ENCODE measurements at regions of chr1 and their contacts with region 1.

Region 1: GRCh38 chr1:30801771-30802198 is 44.2 kb upstream of the LAPTM5 start:
- DNase-seq: peak; percentile 94
- H3K4me3 Mint-ChIP-seq: no peak overlapping the region
- H3K27ac Mint-ChIP-seq: no peak overlapping the region
- H3K4me1 Mint-ChIP-seq: peaks cover 4% of the 10 kb centered on the region
- H3K27me3 Mint-ChIP-seq: peaks cover 39% of the 10 kb centered on the region

Region 2: DNA sequence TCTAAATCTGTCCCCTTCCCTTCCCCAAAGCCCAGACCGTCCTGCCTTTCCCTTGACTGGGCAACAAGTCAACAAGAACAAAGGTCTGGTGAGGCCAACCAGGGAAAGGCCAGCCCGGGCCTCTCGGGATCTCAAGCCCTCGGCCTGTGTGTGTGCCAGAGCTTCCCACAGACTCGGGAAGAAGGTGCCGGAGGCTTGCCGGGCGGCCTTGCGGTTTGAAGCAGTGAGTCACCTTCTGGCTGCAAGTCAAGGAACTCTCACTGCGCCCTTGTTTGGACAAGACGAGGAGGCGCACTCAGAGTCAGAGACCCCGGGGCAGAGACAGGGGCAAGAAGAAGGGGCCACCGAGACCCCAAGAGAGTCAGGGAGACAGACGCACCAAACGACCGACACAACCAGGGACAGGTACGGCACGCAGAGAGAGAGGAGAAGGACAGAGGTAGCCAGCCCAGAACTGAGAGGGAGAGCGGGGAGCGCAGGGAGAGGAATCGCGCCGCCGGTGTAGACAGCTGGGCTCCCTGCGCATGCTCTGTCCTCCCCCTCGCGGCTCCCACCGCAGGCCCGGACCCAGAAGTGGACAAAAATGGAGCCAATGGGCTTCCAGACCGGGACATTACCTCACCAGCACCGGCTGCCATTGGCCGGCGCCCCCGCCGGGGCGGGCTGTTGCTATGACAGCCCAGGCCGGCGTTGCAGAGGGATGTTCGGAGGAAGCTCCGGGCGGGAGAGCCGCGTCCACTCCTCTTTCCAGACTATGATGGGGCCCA is 22.4 kb after region 1 on chr1:
- intact Hi-C with region 1: no loop called
- DNase-seq: peak; percentile 87
- H3K4me3 Mint-ChIP-seq: peak overlapping the region; percentile 77
- H3K27ac Mint-ChIP-seq: no peak overlapping the region
- H3K4me1 Mint-ChIP-seq: peaks cover 10% of the 10 kb centered on the region
- H3K27me3 Mint-ChIP-seq: peaks cover 67% of the 10 kb centered on the region

Region 3: DNA sequence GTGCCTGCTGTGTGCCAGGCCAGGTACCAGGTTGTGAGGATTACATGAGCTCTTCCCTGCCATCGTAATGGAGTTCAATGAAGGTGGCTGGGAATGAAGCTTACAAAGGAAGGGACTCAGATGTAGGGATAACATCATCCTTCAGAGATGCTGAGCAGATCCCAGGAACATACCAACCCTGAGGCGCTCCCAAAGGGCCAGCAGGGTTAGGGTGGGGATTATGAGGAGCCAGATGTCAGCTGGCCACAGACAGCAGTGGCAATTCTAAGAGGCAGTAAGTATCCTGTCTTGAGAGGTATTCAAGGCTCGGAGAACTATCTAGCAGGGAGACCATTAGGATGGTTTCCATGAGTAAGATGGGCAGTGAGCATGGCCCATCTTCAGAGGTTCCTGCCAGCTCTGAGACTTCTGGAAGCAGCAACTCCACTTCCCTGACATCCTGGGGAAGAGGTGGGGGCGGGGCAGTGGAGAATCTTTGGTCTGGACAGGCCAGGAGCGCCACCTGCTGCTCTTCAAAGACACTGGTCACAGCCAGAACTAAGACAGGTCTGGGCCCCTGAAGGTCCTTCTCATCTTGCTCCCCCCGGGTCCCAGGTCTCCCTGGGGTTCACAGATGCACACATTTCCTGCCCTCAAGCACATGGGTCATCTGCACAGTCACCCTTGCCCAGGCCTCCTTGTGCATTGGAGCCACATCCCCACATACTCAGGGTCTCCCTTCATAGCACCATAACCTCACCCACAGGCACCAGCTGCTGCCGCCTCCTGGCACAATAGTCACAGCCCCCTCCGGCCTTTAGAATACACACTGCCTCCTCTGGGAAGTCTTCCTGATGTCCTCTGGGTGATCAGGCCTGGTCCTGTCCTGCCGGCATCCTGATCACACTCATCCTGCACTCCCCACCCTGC is 109.5 kb after region 1 on chr1:
- intact Hi-C with region 1: loop called (anchors 1 kb)
- DNase-seq: peak; percentile 86
- H3K4me3 Mint-ChIP-seq: no peak overlapping the region
- H3K27ac Mint-ChIP-seq: no peak overlapping the region
- H3K4me1 Mint-ChIP-seq: peaks cover 11% of the 10 kb centered on the region
- H3K27me3 Mint-ChIP-seq: peaks cover 34% of the 10 kb centered on the region

Region 4: GRCh38 chr1:30929135-30929889 is 127.5 kb after region 1 on chr1:
- intact Hi-C with region 1: loop called (anchors 1 kb)
- DNase-seq: peak; percentile 87
- H3K4me3 Mint-ChIP-seq: no peak overlapping the region
- H3K27ac Mint-ChIP-seq: no peak overlapping the region
- H3K4me1 Mint-ChIP-seq: no peaks in the 10 kb centered on the region
- H3K27me3 Mint-ChIP-seq: peaks cover 2% of the 10 kb centered on the region